K562 (cell line): ENCODE measurements at regions of chr17 and their contacts with region 1.

Region 1: DNA sequence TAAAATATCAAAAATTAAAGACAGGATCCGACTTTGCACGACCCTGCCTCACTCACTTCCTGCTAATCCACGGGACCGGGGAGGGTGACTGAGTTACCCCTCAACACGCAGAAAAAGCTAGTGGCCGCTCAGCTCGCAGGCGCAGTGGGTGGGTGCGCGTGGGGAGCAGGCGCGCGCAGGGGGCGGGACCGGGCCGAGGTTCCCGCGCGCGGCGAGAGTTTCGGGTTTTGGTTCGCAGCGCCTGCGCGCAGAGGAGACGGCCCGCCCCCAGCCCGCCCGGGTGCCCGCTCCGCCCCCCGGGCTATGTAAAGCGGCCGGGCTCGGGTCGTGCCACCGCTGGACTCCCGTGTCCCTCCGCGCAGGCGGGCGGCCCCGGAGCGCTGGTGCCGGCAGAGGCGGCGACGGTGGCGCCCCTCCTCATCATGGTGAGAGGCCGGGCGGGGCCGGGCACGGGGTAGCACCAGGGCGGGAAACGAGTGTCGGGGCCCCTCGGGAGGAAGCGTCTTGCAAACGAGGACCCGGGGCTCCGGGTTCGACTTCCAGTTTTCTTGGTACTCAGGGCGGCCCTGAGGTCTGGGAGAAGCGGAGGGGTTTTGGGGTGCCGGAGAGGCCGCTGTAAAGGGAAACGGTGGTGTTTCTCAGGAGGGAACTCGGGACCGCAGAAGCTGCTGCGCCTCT is at the start of gene CNP:
- DNase-seq: peak; percentile 92 to 97 (median 96)
- ATAC-seq: peak; percentile 91
- H3K4me3 ChIP-seq: peak within 1 kb of the TSS; percentile 95
- H3K27ac ChIP-seq: peak within 1 kb of the TSS; percentile 83
- H3K4me1 ChIP-seq: peaks cover 10 to 37% of the 10 kb centered on the region in 2 experiments; a peak in 4 of 5 replicates
- H3K27me3 ChIP-seq: no peaks in the 10 kb centered on the region
- CTCF ChIP-seq: 0 out of 6 replicates have a peak, but pooled peaks of 1 of the 3 experiments have one; percentile 2
- EP300 ChIP-seq: no peak; the same call in 1 of the 2 replicates
- POLR2A ChIP-seq: peak; percentile 59
- RAD21 ChIP-seq: no peak
- polyA plus RNA-seq, gene CNP: 1.7 to 3.8 TPM

Region 2: DNA sequence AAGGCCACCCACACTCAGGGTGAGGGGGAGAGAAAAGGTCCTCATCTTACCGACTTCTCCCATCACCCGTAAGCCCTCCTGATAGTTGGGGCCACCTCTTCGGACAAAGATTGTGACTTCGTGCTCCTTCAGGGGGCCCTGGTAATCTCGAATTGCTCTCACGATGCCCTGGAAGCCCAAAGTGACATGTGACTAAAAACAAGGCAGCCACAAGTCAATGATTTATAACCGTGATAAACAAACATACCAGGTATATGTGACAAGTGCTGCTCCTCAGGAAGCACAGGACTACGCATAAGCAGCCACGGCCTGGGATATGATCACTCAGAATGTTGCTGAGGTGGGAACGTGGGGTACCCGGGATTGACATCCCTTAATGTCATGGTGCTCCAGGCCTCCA is 65.0 kb before region 1 on chr17:
- CTCF ChIA-PET with region 1: no interaction called
- POLR2A ChIA-PET with region 1: no interaction called
- in situ Hi-C with region 1: loop called (anchors 5 kb)
- intact Hi-C with region 1: no loop called
- DNase-seq: no peak
- ATAC-seq: no peak
- H3K4me3 ChIP-seq: no peak overlapping the region
- H3K27ac ChIP-seq: no peak overlapping the region
- H3K4me1 ChIP-seq: no peaks in the 10 kb centered on the region
- H3K27me3 ChIP-seq: no peaks in the 10 kb centered on the region
- CTCF ChIP-seq: no peak
- EP300 ChIP-seq: no peak
- POLR2A ChIP-seq: no peak
- RAD21 ChIP-seq: no peak

Region 3: GRCh38 chr17:42027961-42028790 is 61.6 kb after region 1 on chr17:
- CTCF ChIA-PET with region 1: no interaction called
- POLR2A ChIA-PET with region 1: interaction called, 3 read pairs
- in situ Hi-C with region 1: no loop called
- intact Hi-C with region 1: loop called (anchors 5 kb)
- DNase-seq: peak; percentile 50 to 73 (median 60)
- ATAC-seq: peak; percentile 70
- H3K4me3 ChIP-seq: no peak overlapping the region
- H3K27ac ChIP-seq: no peak overlapping the region
- H3K4me1 ChIP-seq: peaks cover 38 to 43% of the 10 kb centered on the region in 2 experiments
- H3K27me3 ChIP-seq: no peaks in the 10 kb centered on the region
- CTCF ChIP-seq: peak; percentile 72 to 81 (median 75)
- EP300 ChIP-seq: no peak
- POLR2A ChIP-seq: no peak
- RAD21 ChIP-seq: peak in 1 of 2 experiments; percentile 66; a peak in 2 of 4 replicates

Region 4: GRCh38 chr17:42101513-42102319 is 135.1 kb after region 1 on chr17:
- CTCF ChIA-PET with region 1: interaction called, 5 read pairs
- POLR2A ChIA-PET with region 1: interaction called, 3 read pairs
- in situ Hi-C with region 1: no loop called
- intact Hi-C with region 1: loop called (anchors 1 kb)
- DNase-seq: peak; percentile 87 to 89 (median 87)
- ATAC-seq: peak; percentile 93
- H3K4me3 ChIP-seq: no peak overlapping the region
- H3K27ac ChIP-seq: no peak overlapping the region
- H3K4me1 ChIP-seq: peaks cover 7 to 27% of the 10 kb centered on the region in 2 experiments; a peak in 3 of 5 replicates
- H3K27me3 ChIP-seq: peaks cover 0 to 12% of the 10 kb centered on the region in 2 experiments; a peak in 3 of 5 replicates
- CTCF ChIP-seq: peak; percentile 92 to 98 (median 94)
- EP300 ChIP-seq: no peak
- POLR2A ChIP-seq: no peak
- RAD21 ChIP-seq: peak; percentile 85 to 92

Region 5: DNA sequence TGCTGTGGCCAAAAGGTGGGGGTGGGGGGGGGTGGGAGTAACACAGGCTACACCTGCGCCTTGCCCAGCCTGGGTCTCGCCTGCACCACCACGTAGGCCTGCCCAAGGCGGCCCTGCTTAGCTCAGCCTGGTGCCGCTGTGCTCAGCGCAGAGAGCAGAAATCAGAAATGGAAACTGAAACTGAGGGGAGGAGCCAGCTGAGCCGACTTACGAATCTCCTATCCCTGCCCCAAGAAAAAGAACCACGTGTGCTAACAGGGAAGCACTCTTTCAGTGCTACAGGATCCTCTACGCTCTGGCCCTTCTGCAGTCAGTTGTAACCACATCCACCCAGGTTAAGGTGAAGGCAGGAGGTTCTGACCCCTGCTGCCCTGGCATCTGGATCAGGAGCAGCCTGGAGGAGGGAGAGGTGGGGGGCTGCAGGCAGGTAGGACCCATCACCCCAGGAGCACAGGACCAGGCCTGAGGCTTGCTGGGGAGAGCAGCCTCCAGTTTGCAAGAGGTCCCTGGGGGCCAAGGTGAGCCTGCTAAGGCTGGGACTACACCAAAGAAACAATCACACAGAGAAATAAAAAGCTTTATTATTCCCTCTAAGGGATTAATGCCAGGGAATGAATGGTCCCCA is 146.1 kb after region 1 on chr17 and contains the start of gene DHX58:
- CTCF ChIA-PET with region 1: interaction called, 20 read pairs
- POLR2A ChIA-PET with region 1: interaction called, 5 read pairs
- in situ Hi-C with region 1: loop called (anchors 5 kb)
- intact Hi-C with region 1: loop called (anchors 2 kb)
- DNase-seq: peak; percentile 42 to 71 (median 56)
- ATAC-seq: peak; percentile 72
- H3K4me3 ChIP-seq: no peak within 1 kb of the TSS
- H3K27ac ChIP-seq: peak within 1 kb of the TSS; percentile 53; the same call in 2 of the 3 replicates
- H3K4me1 ChIP-seq: peaks cover 12 to 59% of the 10 kb centered on the region in 2 experiments; a peak in 4 of 5 replicates
- H3K27me3 ChIP-seq: no peaks in the 10 kb centered on the region
- CTCF ChIP-seq: no peak
- EP300 ChIP-seq: no peak
- POLR2A ChIP-seq: peak; percentile 45; the same call in 1 of the 2 replicates
- RAD21 ChIP-seq: no peak
- polyA plus RNA-seq, gene DHX58: 0.15 to 0.25 TPM

Region 6: DNA sequence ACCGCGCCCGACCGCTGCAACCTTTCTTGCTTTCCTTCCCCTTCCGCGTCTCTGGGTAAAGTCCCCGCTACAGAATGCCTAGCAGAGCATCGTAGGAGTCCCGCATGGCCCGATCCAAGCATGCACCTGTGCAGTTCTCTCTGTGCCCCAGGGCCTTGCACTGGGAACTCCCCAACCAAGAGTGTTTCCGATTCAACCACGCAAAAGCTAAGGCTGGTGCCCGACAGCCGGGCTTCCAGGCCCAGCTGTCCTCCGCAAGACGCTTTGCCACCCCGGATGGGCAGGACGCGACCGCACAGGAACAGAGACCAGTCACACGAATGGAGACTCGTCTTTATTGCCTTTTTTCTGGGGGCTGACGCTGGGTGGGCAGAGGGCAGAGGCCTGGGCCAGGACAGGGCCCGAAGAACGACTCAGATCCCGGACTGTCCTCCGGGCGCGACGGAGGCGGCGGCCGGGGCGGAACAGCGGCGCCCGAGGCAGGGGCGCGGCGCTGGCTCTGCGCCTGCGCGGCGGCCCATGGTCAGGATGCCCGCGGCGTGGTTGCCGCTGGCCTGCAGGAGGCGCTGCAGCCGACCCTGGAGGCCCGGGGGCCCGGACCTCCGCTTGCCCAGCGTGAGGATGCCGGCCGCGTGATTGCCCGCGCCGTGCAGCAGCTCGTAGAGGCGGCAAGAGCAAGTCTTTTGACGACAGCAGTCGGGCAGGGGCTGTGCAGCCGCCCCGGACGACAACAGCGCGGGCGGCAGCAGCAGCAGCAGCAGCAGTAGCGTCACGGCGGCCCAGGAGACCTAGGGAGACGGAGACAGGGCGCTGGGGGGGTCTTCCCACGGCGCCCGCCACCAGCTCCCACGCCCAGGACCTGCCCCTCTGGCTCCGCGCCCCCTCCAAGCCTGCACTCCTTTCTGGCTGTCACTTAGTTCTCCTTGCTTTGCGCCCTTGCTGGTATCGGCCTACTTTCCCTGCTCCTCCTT is 217.4 kb after region 1 on chr17:
- CTCF ChIA-PET with region 1: no interaction called
- POLR2A ChIA-PET with region 1: interaction called, 3 read pairs
- in situ Hi-C with region 1: no loop called
- intact Hi-C with region 1: loop called (anchors 5 kb)
- DNase-seq: peak; percentile 91 to 98 (median 96)
- ATAC-seq: peak; percentile 81
- H3K4me3 ChIP-seq: peak overlapping the region; percentile 65
- H3K27ac ChIP-seq: peak overlapping the region; percentile 66
- H3K4me1 ChIP-seq: peaks cover 31 to 47% of the 10 kb centered on the region in 2 experiments
- H3K27me3 ChIP-seq: no peaks in the 10 kb centered on the region
- CTCF ChIP-seq: peak; percentile 78 to 92 (median 91)
- EP300 ChIP-seq: no peak
- POLR2A ChIP-seq: peak; percentile 56; the same call in 1 of the 2 replicates
- RAD21 ChIP-seq: peak; percentile 49 to 61; a peak in 3 of 4 replicates

Region 7: GRCh38 chr17:42405963-42406495 is 439.4 kb after region 1 on chr17:
- CTCF ChIA-PET with region 1: no interaction called
- POLR2A ChIA-PET with region 1: no interaction called
- in situ Hi-C with region 1: no loop called
- intact Hi-C with region 1: loop called (anchors 5 kb)
- DNase-seq: peak; percentile 67 to 84 (median 72)
- ATAC-seq: peak; percentile 81
- H3K4me3 ChIP-seq: no peak overlapping the region
- H3K27ac ChIP-seq: no peak overlapping the region
- H3K4me1 ChIP-seq: peaks cover 45 to 50% of the 10 kb centered on the region in 2 experiments
- H3K27me3 ChIP-seq: no peaks in the 10 kb centered on the region
- CTCF ChIP-seq: peak; percentile 89 to 91 (median 90)
- EP300 ChIP-seq: no peak
- POLR2A ChIP-seq: no peak
- RAD21 ChIP-seq: peak; percentile 74 to 86

Region 8: GRCh38 chr17:42554250-42555121 is 587.9 kb after region 1 on chr17:
- CTCF ChIA-PET with region 1: no interaction called
- POLR2A ChIA-PET with region 1: no interaction called
- in situ Hi-C with region 1: no loop called
- intact Hi-C with region 1: no loop called
- DNase-seq: peak; percentile 77 to 90 (median 82)
- ATAC-seq: peak; percentile 85
- H3K4me3 ChIP-seq: peak overlapping the region; percentile 87
- H3K27ac ChIP-seq: peak overlapping the region; percentile 91
- H3K4me1 ChIP-seq: peaks cover 18 to 45% of the 10 kb centered on the region in 2 experiments; a peak in 4 of 5 replicates
- H3K27me3 ChIP-seq: no peaks in the 10 kb centered on the region
- CTCF ChIP-seq: no peak
- EP300 ChIP-seq: no peak
- POLR2A ChIP-seq: peak; percentile 81
- RAD21 ChIP-seq: no peak